ENCODE measurements at regions of chr17 and their contacts with region 1.

Region 1: GRCh38 chr17:53680745-53681144 is 142.0 kb upstream of the KIF2B start:
- DNase-seq: no peak
- ATAC-seq: no peak
- H3K4me3 ChIP-seq: no peak overlapping the region
- H3K4me3 Mint-ChIP-seq: no peak overlapping the region
- H3K27ac ChIP-seq: no peak overlapping the region
- H3K27ac Mint-ChIP-seq: no peak overlapping the region
- H3K4me1 ChIP-seq: no peaks in the 10 kb centered on the region
- H3K4me1 Mint-ChIP-seq: no peaks in the 10 kb centered on the region
- H3K27me3 ChIP-seq: no peaks in the 10 kb centered on the region
- H3K27me3 Mint-ChIP-seq: no peaks in the 10 kb centered on the region
- CTCF ChIP-seq: no peak

Region 2: GRCh38 chr17:53336281-53336680 is 344.5 kb before region 1 on chr17:
- CTCF ChIA-PET with region 1: no interaction called
- POLR2A ChIA-PET with region 1: no interaction called
- intact Hi-C with region 1: no loop called
- DNase-seq: no peak
- ATAC-seq: no peak
- H3K4me3 ChIP-seq: no peak overlapping the region
- H3K4me3 Mint-ChIP-seq: no peak overlapping the region
- H3K27ac ChIP-seq: no peak overlapping the region
- H3K27ac Mint-ChIP-seq: no peak overlapping the region
- H3K4me1 ChIP-seq: no peaks in the 10 kb centered on the region
- H3K4me1 Mint-ChIP-seq: no peaks in the 10 kb centered on the region
- H3K27me3 ChIP-seq: no peaks in the 10 kb centered on the region
- H3K27me3 Mint-ChIP-seq: no peaks in the 10 kb centered on the region
- CTCF ChIP-seq: no peak

Region 3: DNA sequence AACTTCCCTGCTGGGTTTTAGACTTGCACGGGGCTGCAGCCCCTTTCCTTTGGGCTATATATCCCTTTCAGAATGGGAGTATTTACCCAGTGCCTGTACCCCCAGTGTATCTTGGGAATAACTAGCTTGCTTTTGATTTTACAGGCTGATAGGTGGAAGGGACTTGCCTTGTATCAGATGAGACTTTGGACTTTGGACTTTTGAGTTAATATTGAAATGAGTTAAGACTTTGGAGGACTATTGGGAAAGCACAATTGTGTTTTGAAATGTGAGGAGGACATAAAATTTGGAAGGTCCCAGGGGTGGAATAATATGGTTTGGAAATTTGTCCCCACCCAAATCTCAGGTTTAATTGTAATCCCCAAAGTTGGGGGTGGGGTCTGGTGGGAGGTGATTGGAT is 251.8 kb before region 1 on chr17:
- CTCF ChIA-PET with region 1: no interaction called
- POLR2A ChIA-PET with region 1: no interaction called
- intact Hi-C with region 1: no loop called
- DNase-seq: no peak
- ATAC-seq: no peak
- H3K4me3 ChIP-seq: no peak overlapping the region
- H3K4me3 Mint-ChIP-seq: no peak overlapping the region
- H3K27ac ChIP-seq: no peak overlapping the region
- H3K27ac Mint-ChIP-seq: no peak overlapping the region
- H3K4me1 ChIP-seq: no peaks in the 10 kb centered on the region
- H3K4me1 Mint-ChIP-seq: no peaks in the 10 kb centered on the region
- H3K27me3 ChIP-seq: no peaks in the 10 kb centered on the region
- H3K27me3 Mint-ChIP-seq: no peaks in the 10 kb centered on the region
- CTCF ChIP-seq: no peak

Region 4: GRCh38 chr17:54280741-54281140 is 600.0 kb after region 1 on chr17:
- CTCF ChIA-PET with region 1: no interaction called
- POLR2A ChIA-PET with region 1: no interaction called
- intact Hi-C with region 1: loop called in 1 of 2 experiments (anchors 5 kb)
- DNase-seq: no peak
- ATAC-seq: no peak
- H3K4me3 ChIP-seq: no peak overlapping the region
- H3K4me3 Mint-ChIP-seq: no peak overlapping the region
- H3K27ac ChIP-seq: no peak overlapping the region
- H3K27ac Mint-ChIP-seq: no peak overlapping the region
- H3K4me1 ChIP-seq: no peaks in the 10 kb centered on the region
- H3K4me1 Mint-ChIP-seq: no peaks in the 10 kb centered on the region
- H3K27me3 ChIP-seq: no peaks in the 10 kb centered on the region
- H3K27me3 Mint-ChIP-seq: no peaks in the 10 kb centered on the region
- CTCF ChIP-seq: no peak